Gastrocnemius medialis (tissue), 4 donors: ENCODE measurements at regions of chr22 and their contacts with region 1.

Region 1: GRCh38 chr22:23743303-23743705 is 7.6 kb downstream of the ZNF70 start:
- DNase-seq: peak; percentile 61 to 93
- ATAC-seq: peak; percentile 43 to 66
- H3K4me3 ChIP-seq: peak overlapping the region in 1 of 4 donors; percentile 22
- H3K27ac ChIP-seq: peak overlapping the region; percentile 79 to 96 (median 86)
- H3K4me1 ChIP-seq: peaks cover 18 to 23% of the 10 kb centered on the region in 2 donors
- H3K27me3 ChIP-seq: no peaks in the 10 kb centered on the region
- CTCF ChIP-seq: no peak
- POLR2A ChIP-seq: no peak

Region 2: GRCh38 chr22:23685205-23685784 is 58.0 kb before region 1 on chr22:
- in situ Hi-C with region 1: no loop called
- intact Hi-C with region 1: loop called (anchors 2 kb)
- DNase-seq: peak; percentile 37 to 78
- ATAC-seq: peak; percentile 65 to 73
- H3K4me3 ChIP-seq: no peak overlapping the region
- H3K27ac ChIP-seq: peak overlapping the region; percentile 85 to 90 (median 86)
- H3K4me1 ChIP-seq: peaks cover 37 to 57% of the 10 kb centered on the region in 2 donors
- H3K27me3 ChIP-seq: no peaks in the 10 kb centered on the region
- CTCF ChIP-seq: no peak
- POLR2A ChIP-seq: no peak

Region 3: DNA sequence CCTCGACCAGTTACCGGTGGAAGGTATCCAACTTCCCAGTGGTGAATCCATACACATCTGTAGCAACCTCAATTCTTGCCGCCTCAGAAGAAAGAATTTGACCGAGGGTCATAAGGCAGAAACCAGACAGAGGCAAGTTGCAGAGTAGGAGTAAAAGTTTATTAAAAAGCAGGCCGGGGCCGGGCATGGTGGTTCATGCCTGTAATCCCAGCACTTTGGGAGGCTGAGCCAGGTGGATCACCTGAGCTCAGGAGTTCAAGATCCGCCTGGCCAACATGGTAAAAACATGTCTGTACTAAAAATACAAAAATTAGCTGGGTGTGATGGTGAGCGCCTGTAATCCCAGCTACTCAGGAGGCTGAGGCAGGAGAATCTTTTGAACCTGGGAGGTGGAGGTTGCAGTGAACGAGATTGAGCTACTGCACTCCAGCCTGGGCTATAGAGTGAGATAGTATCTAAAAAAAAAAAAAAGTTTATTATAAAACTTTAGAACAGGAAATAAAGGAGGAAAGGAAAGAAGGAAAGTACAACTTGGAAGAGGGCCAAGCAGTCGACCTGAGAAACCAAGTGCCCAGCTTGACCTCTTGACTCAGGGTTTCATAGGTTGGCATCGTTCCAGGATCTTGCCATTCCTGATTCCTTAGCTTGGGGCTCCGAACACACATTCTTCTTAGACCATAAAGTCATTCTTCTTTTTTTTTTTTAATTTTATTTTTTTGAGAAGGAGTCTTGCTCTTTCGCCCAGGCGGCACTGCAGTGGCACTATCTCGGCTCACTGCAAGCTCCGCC is 24.7 kb before region 1 on chr22:
- in situ Hi-C with region 1: no loop called
- intact Hi-C with region 1: no loop called
- DNase-seq: no peak
- ATAC-seq: no peak
- H3K4me3 ChIP-seq: no peak overlapping the region
- H3K27ac ChIP-seq: no peak overlapping the region
- H3K4me1 ChIP-seq: peaks cover 11 to 15% of the 10 kb centered on the region in 2 donors
- H3K27me3 ChIP-seq: no peaks in the 10 kb centered on the region
- CTCF ChIP-seq: no peak
- POLR2A ChIP-seq: no peak

Region 4: DNA sequence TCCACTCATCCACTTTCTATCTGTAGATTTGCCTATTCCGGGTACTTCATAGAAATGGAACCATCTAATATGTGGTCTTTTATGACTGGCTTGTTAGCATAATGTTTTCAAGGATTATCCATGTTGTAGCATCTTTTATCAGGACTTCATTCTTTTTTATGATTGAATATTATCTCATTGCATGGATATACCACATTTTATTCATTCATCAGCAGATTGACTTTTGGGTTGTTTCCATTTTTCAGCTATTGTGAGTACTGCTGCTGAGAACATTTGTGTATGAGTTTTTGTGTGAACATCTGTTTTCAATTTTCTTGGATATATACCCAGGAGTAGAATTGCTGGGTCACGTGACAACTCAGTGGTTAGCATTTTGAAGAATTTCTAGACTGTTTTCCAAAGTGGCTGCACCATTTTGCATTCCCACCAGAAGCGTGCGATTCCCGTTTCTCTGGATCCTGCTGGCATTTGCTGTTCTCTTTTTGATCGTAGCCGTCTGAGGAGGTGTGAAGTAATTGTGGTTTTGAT is 86.6 kb after region 1 on chr22:
- in situ Hi-C with region 1: no loop called
- intact Hi-C with region 1: loop called (anchors 2 kb)
- DNase-seq: no peak
- ATAC-seq: no peak
- H3K4me3 ChIP-seq: no peak overlapping the region
- H3K27ac ChIP-seq: peak overlapping the region; percentile 93 to 98 (median 97)
- H3K4me1 ChIP-seq: peaks cover 46 to 59% of the 10 kb centered on the region in 2 donors
- H3K27me3 ChIP-seq: no peaks in the 10 kb centered on the region
- CTCF ChIP-seq: no peak
- POLR2A ChIP-seq: no peak